ENCODE measurements at regions of chr18 and their contacts with region 1.

Region 1: GRCh38 chr18:46173393-46174341 is 69.5 kb downstream of the HAUS1 start:
- DNase-seq: peak; percentile 96
- H3K4me3 Mint-ChIP-seq: peak overlapping the region; percentile 97
- H3K27ac Mint-ChIP-seq: peak overlapping the region; percentile 99
- H3K4me1 Mint-ChIP-seq: peaks cover 42% of the 10 kb centered on the region
- H3K27me3 Mint-ChIP-seq: no peaks in the 10 kb centered on the region

Region 2: DNA sequence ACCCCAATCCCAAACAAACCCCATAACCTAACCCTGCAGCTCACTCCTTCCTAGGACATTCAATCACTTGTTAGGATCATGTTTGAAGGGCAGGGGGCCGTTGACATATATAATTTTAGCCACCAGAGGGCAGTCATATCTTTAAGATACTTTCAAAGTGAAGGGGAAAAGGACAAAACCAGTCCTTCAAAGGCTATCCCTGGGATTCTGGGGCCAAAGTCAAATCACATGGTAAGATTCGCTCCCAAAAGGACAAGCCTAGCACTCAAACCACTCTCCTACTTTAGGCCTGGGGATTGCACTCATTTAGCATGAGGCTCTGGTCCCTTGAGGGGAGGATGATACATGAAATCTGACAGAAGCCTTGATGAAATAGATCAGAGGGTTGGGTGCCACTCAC is 24.9 kb before region 1 on chr18:
- CTCF ChIA-PET with region 1: interaction called, 63 read pairs
- POLR2A ChIA-PET with region 1: no interaction called
- intact Hi-C with region 1: no loop called
- DNase-seq: peak; percentile 54
- H3K4me3 Mint-ChIP-seq: no peak overlapping the region
- H3K27ac Mint-ChIP-seq: no peak overlapping the region
- H3K4me1 Mint-ChIP-seq: peaks cover 32% of the 10 kb centered on the region
- H3K27me3 Mint-ChIP-seq: no peaks in the 10 kb centered on the region

Region 3: GRCh38 chr18:46199515-46200147 is 26.0 kb after region 1 on chr18:
- CTCF ChIA-PET with region 1: interaction called, 35 read pairs
- POLR2A ChIA-PET with region 1: no interaction called
- intact Hi-C with region 1: no loop called
- DNase-seq: no peak
- H3K4me3 Mint-ChIP-seq: no peak overlapping the region
- H3K27ac Mint-ChIP-seq: peak overlapping the region; percentile 5
- H3K4me1 Mint-ChIP-seq: peaks cover 60% of the 10 kb centered on the region
- H3K27me3 Mint-ChIP-seq: no peaks in the 10 kb centered on the region

Region 4: DNA sequence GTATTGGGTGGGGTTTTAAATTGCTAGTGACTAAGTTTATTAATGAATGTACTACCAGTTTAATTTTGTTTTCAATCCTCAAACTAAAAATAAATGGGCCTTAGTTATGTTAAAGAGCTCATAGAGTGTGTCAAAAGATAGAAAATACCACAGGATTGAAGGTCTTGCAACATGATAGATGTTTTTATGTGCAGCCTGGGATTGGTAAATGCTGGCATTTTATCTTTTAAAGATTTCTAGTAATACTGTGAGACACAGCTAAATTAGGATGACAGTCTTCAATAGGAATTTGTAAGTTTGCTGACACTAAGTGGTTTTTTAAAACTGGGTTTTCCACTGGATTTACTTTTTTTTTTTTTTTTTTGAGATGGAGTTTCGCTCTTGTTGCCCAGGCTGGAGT is 52.8 kb after region 1 on chr18:
- CTCF ChIA-PET with region 1: interaction called, 35 read pairs
- POLR2A ChIA-PET with region 1: no interaction called
- intact Hi-C with region 1: no loop called
- DNase-seq: no peak
- H3K4me3 Mint-ChIP-seq: no peak overlapping the region
- H3K27ac Mint-ChIP-seq: no peak overlapping the region
- H3K4me1 Mint-ChIP-seq: peaks cover 72% of the 10 kb centered on the region
- H3K27me3 Mint-ChIP-seq: no peaks in the 10 kb centered on the region

Region 5: DNA sequence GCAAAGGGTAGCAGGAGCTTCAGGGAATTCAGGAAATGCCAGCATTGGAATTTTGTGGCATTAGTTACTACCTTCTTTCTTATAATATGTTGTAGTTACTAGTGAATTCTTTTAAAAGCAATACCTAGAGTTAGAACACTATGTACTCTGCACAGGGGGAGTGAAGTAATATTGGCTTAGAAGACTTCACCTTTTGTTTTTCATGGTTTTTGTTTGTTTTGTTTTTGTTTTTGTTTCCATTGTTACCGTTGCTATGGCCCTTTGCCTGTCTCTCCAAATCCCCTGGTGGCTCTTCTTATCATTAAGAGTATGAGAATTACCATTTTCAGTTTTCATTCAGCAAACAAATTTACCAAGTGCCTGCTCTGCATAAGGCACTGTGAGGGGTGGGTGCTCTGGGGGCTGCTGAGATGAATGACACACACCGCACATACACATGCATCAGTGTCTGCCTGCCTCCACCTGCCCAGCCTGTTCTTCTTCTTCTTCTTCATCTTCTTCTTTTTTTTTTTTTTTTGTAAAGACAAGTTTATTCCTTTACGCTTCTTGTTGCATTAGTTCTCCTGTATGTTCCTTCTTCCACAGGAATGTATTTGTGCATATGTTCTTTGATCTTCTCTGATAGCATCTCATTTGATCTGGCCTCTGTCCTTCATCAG is 90.7 kb after region 1 on chr18:
- CTCF ChIA-PET with region 1: interaction called, 17 read pairs
- POLR2A ChIA-PET with region 1: no interaction called
- intact Hi-C with region 1: no loop called
- DNase-seq: no peak
- H3K4me3 Mint-ChIP-seq: no peak overlapping the region
- H3K27ac Mint-ChIP-seq: no peak overlapping the region
- H3K4me1 Mint-ChIP-seq: peaks cover 57% of the 10 kb centered on the region
- H3K27me3 Mint-ChIP-seq: no peaks in the 10 kb centered on the region

Region 6: GRCh38 chr18:46343931-46344372 is 170.3 kb after region 1 on chr18:
- CTCF ChIA-PET with region 1: interaction called, 3 read pairs
- POLR2A ChIA-PET with region 1: no interaction called
- intact Hi-C with region 1: loop called (anchors 5 kb)
- DNase-seq: peak; percentile 79
- H3K4me3 Mint-ChIP-seq: no peak overlapping the region
- H3K27ac Mint-ChIP-seq: peak overlapping the region; percentile 33
- H3K4me1 Mint-ChIP-seq: peaks cover 22% of the 10 kb centered on the region
- H3K27me3 Mint-ChIP-seq: peaks cover 1% of the 10 kb centered on the region

Region 7: GRCh38 chr18:46917108-46917802 is 743.6 kb after region 1 on chr18 and contains the starts of genes KATNAL2 and PIAS2:
- CTCF ChIA-PET with region 1: no interaction called
- POLR2A ChIA-PET with region 1: no interaction called
- intact Hi-C with region 1: loop called (anchors 5 kb)
- DNase-seq: peak; percentile 80
- H3K4me3 Mint-ChIP-seq: peak within 1 kb of the TSS; percentile 82
- H3K27ac Mint-ChIP-seq: peak within 1 kb of the TSS; percentile 72
- H3K4me1 Mint-ChIP-seq: peaks cover 40% of the 10 kb centered on the region
- H3K27me3 Mint-ChIP-seq: no peaks in the 10 kb centered on the region
- total RNA-seq, gene KATNAL2: 0.46 to 0.69 TPM
- total RNA-seq, gene PIAS2: 19.7 to 22.1 TPM